ENCODE measurements at regions of chr12 and their contacts with region 1.

Region 1: GRCh38 chr12:100200463-100201181 is at the start of gene ACTR6:
- DNase-seq: peak; percentile 97 to 99 (median 98)
- H3K4me3 ChIP-seq: peak within 1 kb of the TSS; percentile 61 to 88
- H3K4me3 Mint-ChIP-seq: peak within 1 kb of the TSS; percentile 97 to 100 (median 98)
- H3K27ac ChIP-seq: peak within 1 kb of the TSS; percentile 91
- H3K27ac Mint-ChIP-seq: peak within 1 kb of the TSS; percentile 98 to 100 (median 100)
- H3K4me1 ChIP-seq: peaks cover 42% of the 10 kb centered on the region
- H3K4me1 Mint-ChIP-seq: peaks cover 17 to 58% (median 35%) of the 10 kb centered on the region in 4 donors
- H3K27me3 ChIP-seq: no peaks in the 10 kb centered on the region
- H3K27me3 Mint-ChIP-seq: no peaks in the 10 kb centered on the region
- total RNA-seq, gene ACTR6: 45.6 to 51.0 TPM

Region 2: GRCh38 chr12:98503592-98504367 is 1696.8 kb before region 1 on chr12:
- CTCF ChIA-PET with region 1: no interaction called
- POLR2A ChIA-PET with region 1: no interaction called
- intact Hi-C with region 1: loop called (anchors 5 kb)
- DNase-seq: peak; percentile 90 to 94 (median 93)
- H3K4me3 ChIP-seq: peak overlapping the region; percentile 72 to 93
- H3K4me3 Mint-ChIP-seq: peak overlapping the region; percentile 95 to 99 (median 98)
- H3K27ac ChIP-seq: peak overlapping the region; percentile 85
- H3K27ac Mint-ChIP-seq: peak overlapping the region; percentile 98 to 100 (median 100)
- H3K4me1 ChIP-seq: peaks cover 16% of the 10 kb centered on the region
- H3K4me1 Mint-ChIP-seq: peaks cover 17 to 42% (median 29%) of the 10 kb centered on the region in 4 donors
- H3K27me3 ChIP-seq: no peaks in the 10 kb centered on the region
- H3K27me3 Mint-ChIP-seq: peaks cover 4 to 15% of the 10 kb centered on the region in 2 donors

Region 3: DNA sequence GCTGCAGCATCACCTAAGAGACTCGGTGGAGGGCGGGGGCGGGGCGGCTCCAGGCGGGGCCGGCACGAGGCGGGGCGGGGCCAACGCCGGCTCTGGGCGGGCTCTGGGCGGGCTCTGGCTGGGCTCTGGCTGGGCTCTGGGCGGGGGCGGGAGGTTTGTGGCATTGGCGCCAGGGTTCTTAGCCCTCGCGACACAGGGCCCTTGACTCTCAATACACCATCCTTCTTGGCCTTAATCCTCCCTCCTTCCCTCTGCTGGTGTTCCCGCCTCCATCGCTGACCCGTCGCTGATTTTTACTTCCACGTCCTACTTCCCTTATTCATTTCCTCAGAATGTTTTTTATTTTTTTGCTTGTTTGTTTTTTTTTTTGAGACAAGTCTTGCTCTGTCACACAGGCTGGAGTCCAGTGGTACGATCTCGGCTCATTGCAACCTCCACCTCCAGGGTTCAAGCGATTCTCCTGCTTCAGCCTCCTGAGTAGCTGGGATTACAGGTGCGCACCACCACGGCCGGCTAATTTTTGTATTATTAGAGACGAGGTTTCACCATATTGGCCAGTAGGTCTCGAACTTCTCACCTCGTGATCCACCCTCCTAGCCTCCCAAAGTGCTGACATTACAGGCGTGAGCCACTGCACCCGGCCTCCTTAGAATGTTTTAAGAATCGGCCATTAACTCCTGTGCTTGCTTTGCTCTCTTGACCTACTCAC is 57.6 kb before region 1 on chr12 and contains the start of gene BLTP3B:
- CTCF ChIA-PET with region 1: interaction called, 3 read pairs
- POLR2A ChIA-PET with region 1: interaction called, 5 read pairs
- intact Hi-C with region 1: loop called (anchors 1 kb)
- DNase-seq: peak; percentile 81 to 88 (median 85)
- H3K4me3 ChIP-seq: peak within 1 kb of the TSS; percentile 66 to 85
- H3K4me3 Mint-ChIP-seq: peak within 1 kb of the TSS; percentile 89 to 98 (median 96)
- H3K27ac ChIP-seq: peak within 1 kb of the TSS; percentile 85
- H3K27ac Mint-ChIP-seq: peak within 1 kb of the TSS; percentile 90 to 97 (median 97)
- H3K4me1 ChIP-seq: peaks cover 22% of the 10 kb centered on the region
- H3K4me1 Mint-ChIP-seq: peaks cover 28 to 42% (median 34%) of the 10 kb centered on the region in 4 donors
- H3K27me3 ChIP-seq: no peaks in the 10 kb centered on the region
- H3K27me3 Mint-ChIP-seq: no peaks in the 10 kb centered on the region
- total RNA-seq, gene BLTP3B: 16.2 to 16.8 TPM

Region 4: GRCh38 chr12:100154474-100155247 is 46.0 kb before region 1 on chr12:
- CTCF ChIA-PET with region 1: interaction called, 17 read pairs
- POLR2A ChIA-PET with region 1: interaction called, 5 read pairs
- intact Hi-C with region 1: loop called (anchors 2 kb)
- DNase-seq: peak; percentile 53 to 70 (median 57)
- H3K4me3 ChIP-seq: no peak overlapping the region
- H3K4me3 Mint-ChIP-seq: no peak overlapping the region
- H3K27ac ChIP-seq: no peak overlapping the region
- H3K27ac Mint-ChIP-seq: peak overlapping the region in 1 of 7 donors; percentile 39
- H3K4me1 ChIP-seq: no peaks in the 10 kb centered on the region
- H3K4me1 Mint-ChIP-seq: peaks cover 3 to 7% (median 4%) of the 10 kb centered on the region in 4 donors
- H3K27me3 ChIP-seq: no peaks in the 10 kb centered on the region
- H3K27me3 Mint-ChIP-seq: no peaks in the 10 kb centered on the region

Region 5: DNA sequence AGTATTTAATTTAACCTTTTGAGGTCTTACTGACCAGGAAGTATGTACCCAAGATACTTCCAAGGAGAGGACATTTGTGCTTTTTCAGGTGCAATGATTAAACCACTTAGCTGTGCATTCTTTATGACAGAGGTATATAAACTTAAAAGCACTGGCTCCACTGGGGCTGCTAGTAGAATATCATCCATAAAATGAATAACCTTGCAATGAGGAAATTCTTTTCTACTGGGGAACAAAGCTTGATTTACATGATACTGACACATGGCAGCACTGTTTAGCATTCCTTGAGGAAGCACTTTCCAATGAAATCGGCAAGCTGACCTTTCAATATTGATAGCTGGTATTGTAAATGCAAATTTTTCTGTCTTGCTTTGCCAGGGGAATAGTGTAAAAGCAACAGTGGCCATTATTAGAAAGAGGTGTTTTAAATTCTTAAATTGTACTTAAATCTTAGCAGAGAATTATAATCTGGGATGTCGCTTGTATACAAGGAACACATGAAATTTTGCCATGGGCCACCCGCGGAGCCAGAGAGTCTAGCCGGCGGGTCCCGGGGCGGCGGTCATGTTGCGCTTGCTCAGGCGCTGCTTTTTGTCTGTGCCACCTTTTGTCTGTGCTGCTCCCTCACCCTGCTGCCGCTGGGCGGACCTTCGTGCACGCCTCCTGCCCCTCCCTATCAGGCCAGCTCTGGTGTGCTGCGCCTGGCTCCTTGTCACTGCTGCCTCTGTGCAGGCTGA is 37.0 kb before region 1 on chr12:
- CTCF ChIA-PET with region 1: interaction called, 5 read pairs
- POLR2A ChIA-PET with region 1: interaction called, 13 read pairs
- intact Hi-C with region 1: loop called (anchors 1 kb)
- DNase-seq: peak; percentile 55 to 74 (median 57)
- H3K4me3 ChIP-seq: peak overlapping the region in 1 of 2 donors; percentile 14
- H3K4me3 Mint-ChIP-seq: peak overlapping the region; percentile 45 to 77 (median 71)
- H3K27ac ChIP-seq: no peak overlapping the region
- H3K27ac Mint-ChIP-seq: peak overlapping the region in 2 of 7 donors; percentile 59 to 88
- H3K4me1 ChIP-seq: peaks cover 5% of the 10 kb centered on the region
- H3K4me1 Mint-ChIP-seq: peaks cover 7 to 12% (median 9%) of the 10 kb centered on the region in 4 donors
- H3K27me3 ChIP-seq: no peaks in the 10 kb centered on the region
- H3K27me3 Mint-ChIP-seq: no peaks in the 10 kb centered on the region

Region 6: GRCh38 chr12:100266835-100267618 is 66.4 kb after region 1 on chr12 and contains the starts of genes DEPDC4 and SCYL2:
- CTCF ChIA-PET with region 1: interaction called, 11 read pairs
- POLR2A ChIA-PET with region 1: interaction called, 63 read pairs
- intact Hi-C with region 1: loop called (anchors 1 kb)
- DNase-seq: peak; percentile 93 to 98 (median 96)
- H3K4me3 ChIP-seq: peak within 1 kb of the TSS; percentile 26 to 90
- H3K4me3 Mint-ChIP-seq: peak within 1 kb of the TSS; percentile 97 to 100 (median 99)
- H3K27ac ChIP-seq: peak within 1 kb of the TSS; percentile 95
- H3K27ac Mint-ChIP-seq: peak within 1 kb of the TSS; percentile 95 to 100 (median 99)
- H3K4me1 ChIP-seq: peaks cover 46% of the 10 kb centered on the region
- H3K4me1 Mint-ChIP-seq: peaks cover 19 to 44% (median 32%) of the 10 kb centered on the region in 4 donors
- H3K27me3 ChIP-seq: no peaks in the 10 kb centered on the region
- H3K27me3 Mint-ChIP-seq: no peaks in the 10 kb centered on the region
- total RNA-seq, gene DEPDC4: 0.38 to 1.4 TPM
- total RNA-seq, gene SCYL2: 47.8 to 52.5 TPM

Region 7: GRCh38 chr12:102119674-102120563 is 1919.3 kb after region 1 on chr12 and contains the starts of genes NUP37 and PARPBP:
- CTCF ChIA-PET with region 1: no interaction called
- POLR2A ChIA-PET with region 1: no interaction called
- intact Hi-C with region 1: loop called (anchors 10 kb)
- DNase-seq: peak; percentile 92 to 93 (median 92)
- H3K4me3 ChIP-seq: peak within 1 kb of the TSS; percentile 86 to 95
- H3K4me3 Mint-ChIP-seq: peak within 1 kb of the TSS; percentile 86 to 96 (median 92)
- H3K27ac ChIP-seq: peak within 1 kb of the TSS; percentile 93
- H3K27ac Mint-ChIP-seq: peak within 1 kb of the TSS; percentile 88 to 96 (median 94)
- H3K4me1 ChIP-seq: peaks cover 24% of the 10 kb centered on the region
- H3K4me1 Mint-ChIP-seq: peaks cover 13 to 35% (median 19%) of the 10 kb centered on the region in 4 donors
- H3K27me3 ChIP-seq: no peaks in the 10 kb centered on the region
- H3K27me3 Mint-ChIP-seq: no peaks in the 10 kb centered on the region
- total RNA-seq, gene NUP37: 17.0 to 18.8 TPM
- total RNA-seq, gene PARPBP: 2.3 to 2.6 TPM

Measured in CD4-positive, alpha-beta memory T cell (primary cell).